Posterior vena cava (tissue), 2 donors: ENCODE measurements at regions of chr4 and their contacts with region 1.

Region 1: DNA sequence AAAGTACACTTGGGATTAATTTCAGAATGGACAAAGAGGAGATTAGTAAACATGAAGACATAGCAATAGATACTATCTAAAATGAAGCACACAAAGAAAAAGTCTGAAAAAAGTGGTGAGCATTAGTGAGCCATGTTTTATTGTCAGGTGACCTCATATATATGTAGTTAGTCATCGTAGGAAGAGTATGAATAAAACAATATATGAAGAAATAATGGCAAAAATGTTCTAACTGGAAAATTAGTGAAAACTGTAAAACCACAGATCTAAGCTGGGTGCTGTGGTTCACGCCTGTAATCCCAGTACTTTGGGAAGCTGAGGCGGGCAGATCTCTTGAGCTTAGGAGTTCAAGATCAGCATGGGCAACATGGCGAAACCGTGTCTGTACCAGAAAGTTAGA is 67.9 kb downstream of the RBPJ start:
- DNase-seq: no peak

Region 2: GRCh38 chr4:25448379-25449109 is 940.1 kb before region 1 on chr4:
- intact Hi-C with region 1: no loop called
- DNase-seq: no peak

Region 3: DNA sequence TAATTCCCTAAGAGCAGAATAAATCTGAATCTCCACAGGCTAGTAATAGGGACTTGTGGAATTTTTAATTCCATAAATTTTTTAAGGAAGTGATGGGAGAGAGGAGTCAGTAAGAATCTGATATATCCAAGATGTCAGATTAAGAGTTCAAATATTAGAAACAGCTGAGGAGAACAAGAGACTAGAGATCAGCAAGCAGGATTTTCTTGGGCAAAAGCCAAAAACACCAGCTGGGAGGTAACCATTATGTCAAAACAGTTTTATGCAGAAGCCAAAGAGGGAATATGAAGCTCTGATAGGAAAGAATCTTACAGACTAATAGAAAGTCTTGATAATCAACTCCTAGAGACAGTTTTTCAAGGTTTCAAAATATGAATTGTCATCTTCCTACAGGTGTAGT is 140.0 kb before region 1 on chr4:
- intact Hi-C with region 1: no loop called
- DNase-seq: no peak

Region 4: DNA sequence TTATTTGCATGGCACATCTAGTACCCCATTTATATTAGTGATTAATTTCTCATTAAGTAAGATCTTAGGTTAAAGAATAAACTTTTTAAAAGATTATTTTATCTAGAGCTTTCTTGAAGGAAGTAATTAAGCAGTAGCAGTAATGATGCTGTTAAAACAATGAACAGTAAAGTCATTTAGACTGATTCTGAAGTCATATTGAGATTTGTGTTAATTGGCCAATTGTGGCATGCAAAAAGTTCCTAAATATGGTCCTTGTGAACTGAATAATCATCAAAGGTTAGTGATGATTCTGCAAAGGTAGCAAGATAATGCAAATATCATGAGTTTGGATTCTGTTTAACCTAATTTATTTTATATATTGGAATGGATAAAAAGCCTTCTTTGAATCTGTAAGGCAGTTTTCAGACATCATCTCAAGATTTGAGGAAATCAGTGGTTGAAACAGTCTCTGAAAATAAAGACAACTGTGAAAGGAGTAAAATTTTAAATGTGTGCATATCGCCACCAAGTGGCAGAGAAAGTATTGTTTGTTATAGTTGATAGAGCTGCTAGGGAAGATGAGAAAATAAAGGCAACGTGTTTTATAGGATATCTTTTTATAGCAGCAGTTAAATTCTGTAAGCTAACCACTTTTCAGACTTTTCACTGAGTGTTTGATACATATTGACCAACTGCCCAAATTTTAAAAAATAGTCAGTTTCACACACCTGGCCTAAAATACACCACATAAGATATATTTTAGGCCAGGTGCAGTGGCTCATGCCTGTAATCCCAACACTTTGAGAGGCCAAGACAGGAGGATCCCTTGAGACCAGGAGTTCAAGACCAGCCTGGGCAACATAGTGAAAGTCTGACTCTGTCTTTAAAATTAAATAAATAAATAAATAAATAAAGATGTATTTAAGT is 22.0 kb after region 1 on chr4:
- intact Hi-C with region 1: loop called in 1 of 2 experiments (anchors 1 kb)
- DNase-seq: no peak